ENCODE measurements at regions of chr5 and their contacts with region 1.

Region 1: DNA sequence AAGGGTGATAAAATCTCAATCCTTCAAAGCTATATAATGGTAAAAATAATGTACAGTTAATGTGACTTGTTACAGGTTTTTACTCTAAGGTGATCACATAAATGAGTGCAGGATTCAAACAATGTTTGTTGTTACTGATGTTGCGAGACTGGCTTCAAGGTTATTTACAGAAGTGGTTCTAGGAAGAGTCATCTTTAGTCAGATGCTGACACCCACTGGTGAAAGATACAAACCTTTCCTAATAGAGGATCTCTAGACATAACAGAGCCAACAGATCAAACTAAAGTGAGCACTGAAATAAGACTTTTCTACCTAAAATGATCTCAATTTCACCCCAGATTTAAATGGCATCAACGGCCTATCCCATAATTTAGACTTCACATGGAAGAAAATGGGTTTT is 20.2 kb downstream of the ARSB start:
- DNase-seq: no peak
- H3K4me3 ChIP-seq: no peak overlapping the region
- CTCF ChIP-seq: peak; percentile 46

Region 2: GRCh38 chr5:78320401-78320800 is 644.5 kb before region 1 on chr5:
- CTCF ChIA-PET with region 1: interaction called, 10 read pairs
- POLR2A ChIA-PET with region 1: no interaction called
- DNase-seq: peak; percentile 16
- H3K4me3 ChIP-seq: no peak overlapping the region
- CTCF ChIP-seq: peak; percentile 44

Region 3: GRCh38 chr5:78537821-78538220 is 427.1 kb before region 1 on chr5:
- CTCF ChIA-PET with region 1: interaction called, 37 read pairs
- POLR2A ChIA-PET with region 1: no interaction called
- DNase-seq: no peak
- H3K4me3 ChIP-seq: no peak overlapping the region
- CTCF ChIP-seq: peak; percentile 57

Region 4: GRCh38 chr5:78899922-78900362 is 64.9 kb before region 1 on chr5:
- CTCF ChIA-PET with region 1: interaction called, 191 read pairs
- POLR2A ChIA-PET with region 1: no interaction called
- DNase-seq: no peak
- H3K4me3 ChIP-seq: no peak overlapping the region
- CTCF ChIP-seq: peak; percentile 70

Region 5: DNA sequence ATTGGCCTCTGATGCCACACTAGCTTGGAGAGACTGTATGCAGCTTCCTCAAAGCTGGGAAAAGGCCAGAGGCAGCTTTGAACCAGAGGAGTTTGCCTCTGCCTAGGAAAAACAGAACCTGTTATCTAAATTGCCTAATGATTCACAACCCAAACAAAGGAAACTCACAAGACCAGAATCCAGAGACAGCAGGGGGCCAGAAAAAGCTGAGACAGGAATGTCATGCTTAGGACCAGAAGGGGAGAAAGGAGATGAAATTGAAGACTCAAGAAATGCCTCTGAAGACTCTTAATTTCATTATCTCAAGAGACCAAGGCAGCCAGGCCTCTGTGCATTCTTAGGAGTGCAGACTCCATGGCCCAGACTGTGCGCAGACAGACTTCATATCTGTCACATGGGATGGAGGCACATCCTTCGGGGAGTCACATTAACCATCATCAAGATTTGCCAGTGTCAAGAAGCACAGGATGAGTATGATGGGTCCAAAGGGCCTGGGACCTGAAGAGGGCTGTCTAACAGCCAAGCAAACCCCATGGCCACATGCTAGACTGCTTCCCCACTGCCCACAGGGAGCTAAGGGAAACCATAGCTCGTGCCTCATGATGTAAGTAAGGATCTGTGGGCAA is 37.1 kb before region 1 on chr5:
- CTCF ChIA-PET with region 1: interaction called, 10 read pairs
- POLR2A ChIA-PET with region 1: no interaction called
- DNase-seq: peak; percentile 53
- H3K4me3 ChIP-seq: no peak overlapping the region
- CTCF ChIP-seq: no peak

Region 6: DNA sequence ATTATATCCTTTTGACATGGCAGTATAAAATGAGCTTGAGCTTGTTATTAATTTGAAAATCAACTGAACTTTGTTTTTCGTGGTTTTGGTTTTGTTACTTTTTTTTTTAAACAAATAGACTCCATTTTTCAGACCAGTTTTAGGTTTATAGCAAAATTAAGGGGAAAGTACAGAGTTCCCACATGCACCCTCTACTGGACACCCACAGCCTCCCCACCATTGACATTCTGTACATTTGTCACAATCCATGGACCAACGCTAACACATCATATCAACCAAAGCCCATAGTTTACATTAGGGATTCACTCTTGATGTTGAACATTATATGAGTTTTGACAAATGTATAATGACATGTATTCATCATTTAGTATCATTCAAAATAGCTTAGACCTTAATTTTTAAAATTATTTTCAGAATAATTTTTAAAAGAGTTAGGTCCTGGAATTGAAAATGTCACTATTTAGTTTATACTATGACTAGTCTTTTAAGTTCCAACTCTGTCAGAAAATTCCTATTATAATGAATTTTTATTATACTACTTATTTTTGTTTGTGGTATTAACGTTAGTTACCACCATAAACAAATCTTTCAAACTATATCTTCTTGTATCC is 235.8 kb after region 1 on chr5:
- CTCF ChIA-PET with region 1: no interaction called
- POLR2A ChIA-PET with region 1: no interaction called
- DNase-seq: no peak
- H3K4me3 ChIP-seq: no peak overlapping the region
- CTCF ChIP-seq: peak; percentile 52